Aorta (tissue), 5 donors: ENCODE measurements at regions of chr20 and their contacts with region 1.

Region 1: GRCh38 chr20:38748097-38748860 is at the start of gene ACTR5:
- DNase-seq: peak; percentile 95 to 99
- ATAC-seq: peak; percentile 98
- H3K4me3 ChIP-seq: peak within 1 kb of the TSS; percentile 54 to 91
- H3K27ac ChIP-seq: peak within 1 kb of the TSS; percentile 31 to 69
- H3K4me1 ChIP-seq: peaks cover 0 to 5% of the 10 kb centered on the region in 2 donors
- H3K27me3 ChIP-seq: no peaks in the 10 kb centered on the region
- total RNA-seq, gene ACTR5: 7.0 to 7.1 TPM

Region 2: DNA sequence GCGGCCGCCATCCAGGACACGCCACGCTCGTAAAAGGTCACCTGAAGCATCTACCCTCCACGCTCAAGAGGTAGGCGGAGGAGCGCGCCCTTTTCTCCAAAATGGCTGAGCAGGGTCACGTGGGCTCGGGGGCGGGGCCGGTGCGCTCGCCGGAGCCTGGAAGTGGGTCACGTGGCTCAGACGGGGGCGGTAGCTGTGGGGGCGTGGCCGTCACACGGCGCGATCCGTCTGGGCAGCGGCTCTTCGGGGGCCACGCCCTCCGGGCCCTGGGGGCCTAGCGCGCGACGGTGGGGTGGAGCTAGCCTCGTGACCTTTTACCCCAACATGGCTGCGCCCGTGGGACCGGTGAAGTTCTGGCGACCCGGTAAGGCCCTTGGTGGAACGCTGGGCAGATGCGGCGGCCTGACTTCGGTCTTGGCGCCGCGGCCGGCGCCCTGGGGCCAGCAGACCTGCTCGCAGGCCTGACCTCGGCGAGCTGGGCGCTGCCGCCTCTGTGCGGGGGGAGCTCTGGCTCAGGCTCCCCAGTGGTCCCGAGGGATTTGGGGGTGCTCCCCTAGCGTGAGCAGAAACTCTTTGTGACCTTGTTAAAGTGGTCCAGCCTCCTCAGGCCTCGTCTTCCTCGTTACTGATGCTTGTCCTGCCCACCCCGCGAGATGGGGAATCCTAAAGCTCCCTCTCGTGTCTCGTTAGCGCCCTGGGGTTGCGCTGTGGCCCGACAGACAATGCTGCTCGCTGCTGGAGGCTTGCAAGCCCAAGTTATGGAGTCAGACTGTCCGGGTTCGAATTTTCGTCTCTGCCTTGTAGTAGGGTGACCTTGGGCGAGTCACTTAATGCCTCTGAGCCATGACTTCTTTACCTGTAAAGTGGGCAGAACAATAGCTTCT is 214.0 kb after region 1 on chr20 and contains the start of gene DHX35:
- intact Hi-C with region 1: loop called in 1 of 2 experiments (anchors 10 kb)
- DNase-seq: peak; percentile 99 to 100
- ATAC-seq: peak; percentile 100
- H3K4me3 ChIP-seq: peak within 1 kb of the TSS; percentile 86 to 89
- H3K27ac ChIP-seq: peak within 1 kb of the TSS in 1 of 2 donors; percentile 76
- H3K4me1 ChIP-seq: peaks cover 2 to 5% of the 10 kb centered on the region in 2 donors
- H3K27me3 ChIP-seq: no peaks in the 10 kb centered on the region
- total RNA-seq, gene DHX35: 11.3 TPM